ENCODE measurements at regions of chr16 and their contacts with region 1.

Region 1: GRCh38 chr16:50665128-50665878 is 15.8 kb downstream of the SNX20 start:
- DNase-seq: peak in 1 of 2 donors; percentile 88
- H3K4me3 ChIP-seq: peak overlapping the region; percentile 41 to 61
- H3K27ac ChIP-seq: peak overlapping the region; percentile 58 to 65
- H3K4me1 ChIP-seq: peaks cover 0 to 5% of the 10 kb centered on the region in 2 donors
- H3K27me3 ChIP-seq: no peaks in the 10 kb centered on the region
- CTCF ChIP-seq: peak; percentile 82 to 93 (median 83)

Region 2: DNA sequence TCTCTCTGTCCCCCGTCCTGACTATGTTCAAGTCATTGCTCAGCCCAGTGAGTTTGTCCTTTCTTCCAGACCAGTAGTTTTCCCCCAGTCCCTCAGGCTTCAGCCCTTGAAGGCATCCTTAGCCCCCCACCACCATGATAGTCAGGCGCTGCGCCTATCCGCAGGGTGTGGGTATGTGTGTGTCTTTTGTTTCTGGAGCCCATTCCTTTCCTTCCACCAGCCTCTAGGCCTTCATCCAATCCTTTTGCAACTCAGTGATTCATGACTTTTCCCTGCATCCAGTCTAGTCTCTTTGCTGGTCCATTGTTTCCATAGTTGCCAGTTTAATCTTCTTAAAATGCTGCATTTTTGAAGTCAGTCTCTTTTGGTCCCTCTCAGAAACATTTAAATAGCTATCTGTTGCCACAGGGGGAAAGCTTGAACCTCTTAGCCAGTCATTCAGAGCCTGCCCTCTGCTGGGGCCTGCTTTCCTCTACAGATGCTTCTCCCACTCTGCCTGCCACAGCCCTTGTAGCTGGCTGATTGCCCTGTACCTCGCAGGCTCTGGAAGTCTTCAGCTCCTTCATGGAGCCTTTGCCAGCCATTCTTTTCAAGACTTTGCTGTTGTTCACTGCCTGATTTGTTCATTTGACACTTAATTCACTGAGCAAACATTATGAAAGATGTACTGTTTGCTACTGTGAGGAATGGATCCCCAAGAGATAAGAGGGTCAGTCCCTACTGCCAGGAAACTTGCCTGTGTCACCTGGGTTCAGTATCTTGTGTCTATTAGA is 454.9 kb before region 1 on chr16:
- intact Hi-C with region 1: loop called (anchors 5 kb)
- DNase-seq: peak in 1 of 2 donors; percentile 89
- H3K4me3 ChIP-seq: no peak overlapping the region
- H3K27ac ChIP-seq: peak overlapping the region; percentile 17 to 43
- H3K4me1 ChIP-seq: peaks cover 13 to 44% of the 10 kb centered on the region in 2 donors
- H3K27me3 ChIP-seq: no peaks in the 10 kb centered on the region
- CTCF ChIP-seq: peak; percentile 60 to 78 (median 63)

Region 3: DNA sequence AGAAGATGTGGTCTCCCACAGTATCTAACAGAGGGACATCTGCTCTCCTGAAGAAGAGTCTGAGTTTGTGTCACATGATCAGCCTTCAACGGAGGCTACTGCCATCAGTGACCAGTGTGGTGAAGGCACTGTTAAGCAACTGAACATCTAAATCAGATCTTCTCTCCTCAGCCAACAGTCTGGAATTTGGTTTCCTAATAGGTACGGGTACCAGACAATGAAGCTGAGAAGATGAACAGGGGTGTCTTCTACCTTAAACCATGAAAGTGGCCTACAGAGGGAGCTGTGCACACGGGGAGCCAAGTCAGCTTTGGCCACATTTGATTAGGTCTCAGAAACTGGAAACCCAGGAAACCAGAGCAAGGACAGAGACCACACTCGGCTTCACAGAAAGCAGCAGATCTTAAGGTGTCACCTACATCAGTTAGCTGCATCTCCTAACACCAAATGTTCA is 338.3 kb before region 1 on chr16:
- intact Hi-C with region 1: loop called (anchors 5 kb)
- DNase-seq: peak in 1 of 2 donors; percentile 66
- H3K4me3 ChIP-seq: no peak overlapping the region
- H3K27ac ChIP-seq: no peak overlapping the region
- H3K4me1 ChIP-seq: peaks cover 0 to 7% of the 10 kb centered on the region in 2 donors
- H3K27me3 ChIP-seq: no peaks in the 10 kb centered on the region
- CTCF ChIP-seq: peak; percentile 42 to 65 (median 46)

Region 4: GRCh38 chr16:50735629-50736122 is 70.4 kb after region 1 on chr16:
- intact Hi-C with region 1: no loop called
- DNase-seq: no peak
- H3K4me3 ChIP-seq: no peak overlapping the region
- H3K27ac ChIP-seq: no peak overlapping the region
- H3K4me1 ChIP-seq: peaks cover 0 to 20% of the 10 kb centered on the region in 2 donors
- H3K27me3 ChIP-seq: no peaks in the 10 kb centered on the region
- CTCF ChIP-seq: no peak

Measured in ascending aorta (tissue), 2 donors.